ENCODE measurements at regions of chr10 and their contacts with region 1.

Region 1: DNA sequence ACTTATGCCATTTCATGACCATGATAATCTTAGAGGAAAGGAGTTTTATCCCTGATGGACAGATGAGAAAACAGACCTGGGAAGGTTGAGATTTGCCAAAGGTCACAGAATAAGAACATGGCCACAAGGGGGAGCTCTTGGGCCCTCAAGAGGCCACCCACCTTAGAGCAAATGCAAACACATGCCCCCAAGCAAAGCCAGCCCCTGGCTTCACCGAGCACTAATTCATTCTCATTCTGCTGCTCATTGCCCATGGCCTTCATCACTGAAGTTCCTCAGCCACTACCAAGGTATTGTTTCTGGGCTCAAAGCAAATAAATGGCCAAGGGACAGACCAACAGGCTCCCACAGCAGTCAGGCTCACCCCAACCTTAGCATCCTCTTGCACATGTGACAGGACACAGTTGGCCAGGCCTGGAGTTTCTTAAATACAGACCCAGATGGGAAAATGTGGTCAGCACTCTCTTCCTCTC is 44.2 kb downstream of the PDLIM1 start:
- DNase-seq: peak; percentile 59
- ATAC-seq: peak; percentile 86
- H3K4me3 Mint-ChIP-seq: no peak overlapping the region
- H3K27ac Mint-ChIP-seq: peak overlapping the region; percentile 61
- H3K4me1 Mint-ChIP-seq: peaks cover 25% of the 10 kb centered on the region
- H3K27me3 Mint-ChIP-seq: no peaks in the 10 kb centered on the region
- CTCF ChIP-seq: peak; percentile 26

Region 2: DNA sequence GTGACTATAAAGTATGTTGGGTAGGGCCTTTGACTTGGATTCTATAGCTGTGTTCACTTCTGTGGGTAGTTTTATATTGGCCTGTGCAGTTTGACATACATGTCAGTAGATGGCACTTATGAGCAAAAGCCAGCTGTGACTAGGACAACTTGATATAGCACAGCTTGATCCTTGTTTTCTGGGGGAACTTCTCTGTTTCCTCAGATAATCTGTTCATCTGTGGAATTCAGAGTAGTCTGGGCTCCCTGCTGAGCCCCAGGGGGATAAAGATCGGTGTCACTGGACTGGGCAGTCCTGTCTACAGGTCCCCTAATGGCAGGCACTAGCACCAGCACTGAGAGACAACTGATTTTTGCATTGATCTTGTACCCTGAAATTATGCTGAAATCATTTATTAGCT is 282.7 kb before region 1 on chr10:
- CTCF ChIA-PET with region 1: no interaction called
- POLR2A ChIA-PET with region 1: no interaction called
- intact Hi-C with region 1: loop called (anchors 2 kb)
- DNase-seq: no peak
- ATAC-seq: no peak
- H3K4me3 Mint-ChIP-seq: no peak overlapping the region
- H3K27ac Mint-ChIP-seq: no peak overlapping the region
- H3K4me1 Mint-ChIP-seq: no peaks in the 10 kb centered on the region
- H3K27me3 Mint-ChIP-seq: peaks cover 1% of the 10 kb centered on the region
- CTCF ChIP-seq: no peak

Region 3: DNA sequence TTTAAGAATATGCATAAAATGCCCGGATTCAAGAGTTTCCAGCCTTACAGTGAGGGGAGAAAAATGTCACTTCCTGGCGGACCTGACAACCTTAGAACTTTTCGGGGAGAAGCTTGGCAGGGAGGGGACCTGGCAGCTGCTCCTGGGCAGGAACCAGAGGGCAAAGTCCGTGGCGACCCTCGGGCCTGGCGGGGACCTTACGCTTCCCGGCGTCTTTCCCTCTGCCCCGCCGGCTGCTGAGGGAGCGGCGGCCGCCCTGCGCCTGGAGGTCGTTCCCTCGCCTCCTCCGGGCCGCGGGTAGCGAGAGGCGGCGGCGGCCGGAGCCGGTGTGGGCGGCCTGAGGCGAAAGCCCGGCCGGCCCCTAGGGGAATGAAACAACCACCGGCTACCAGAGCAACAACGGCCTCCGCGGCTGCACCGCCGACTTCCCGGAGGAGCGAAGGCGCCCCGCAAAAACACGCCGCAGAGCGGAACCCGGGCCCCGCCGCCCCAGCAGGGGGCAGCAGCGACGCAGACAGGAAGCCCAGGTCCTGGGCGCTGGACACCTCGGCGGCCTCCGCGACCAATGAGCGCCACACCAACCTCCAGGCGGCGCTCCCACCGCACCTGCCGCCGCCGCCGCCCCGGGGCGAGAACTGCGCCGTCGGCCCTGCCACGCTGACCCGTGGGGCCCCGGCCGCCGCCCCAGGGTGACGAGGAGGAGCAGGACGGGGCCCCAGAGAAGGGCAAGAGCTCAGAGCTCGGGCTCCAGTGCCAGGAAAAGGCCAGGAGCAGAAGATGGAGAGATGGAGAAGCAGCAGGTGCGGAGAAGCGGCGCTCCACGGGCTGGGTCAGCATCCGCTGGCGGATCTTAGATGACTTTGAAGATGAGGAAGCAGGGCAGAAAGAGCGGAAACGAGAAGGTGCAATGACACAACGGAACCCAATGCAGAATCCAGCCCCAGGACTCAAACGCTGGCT is 63.1 kb before region 1 on chr10:
- CTCF ChIA-PET with region 1: interaction called, 12 read pairs
- POLR2A ChIA-PET with region 1: no interaction called
- intact Hi-C with region 1: loop called (anchors 1 kb)
- DNase-seq: peak; percentile 87
- ATAC-seq: peak; percentile 96
- H3K4me3 Mint-ChIP-seq: peak overlapping the region; percentile 83
- H3K27ac Mint-ChIP-seq: peak overlapping the region; percentile 84
- H3K4me1 Mint-ChIP-seq: peaks cover 7% of the 10 kb centered on the region
- H3K27me3 Mint-ChIP-seq: no peaks in the 10 kb centered on the region
- CTCF ChIP-seq: peak; percentile 68

Region 4: DNA sequence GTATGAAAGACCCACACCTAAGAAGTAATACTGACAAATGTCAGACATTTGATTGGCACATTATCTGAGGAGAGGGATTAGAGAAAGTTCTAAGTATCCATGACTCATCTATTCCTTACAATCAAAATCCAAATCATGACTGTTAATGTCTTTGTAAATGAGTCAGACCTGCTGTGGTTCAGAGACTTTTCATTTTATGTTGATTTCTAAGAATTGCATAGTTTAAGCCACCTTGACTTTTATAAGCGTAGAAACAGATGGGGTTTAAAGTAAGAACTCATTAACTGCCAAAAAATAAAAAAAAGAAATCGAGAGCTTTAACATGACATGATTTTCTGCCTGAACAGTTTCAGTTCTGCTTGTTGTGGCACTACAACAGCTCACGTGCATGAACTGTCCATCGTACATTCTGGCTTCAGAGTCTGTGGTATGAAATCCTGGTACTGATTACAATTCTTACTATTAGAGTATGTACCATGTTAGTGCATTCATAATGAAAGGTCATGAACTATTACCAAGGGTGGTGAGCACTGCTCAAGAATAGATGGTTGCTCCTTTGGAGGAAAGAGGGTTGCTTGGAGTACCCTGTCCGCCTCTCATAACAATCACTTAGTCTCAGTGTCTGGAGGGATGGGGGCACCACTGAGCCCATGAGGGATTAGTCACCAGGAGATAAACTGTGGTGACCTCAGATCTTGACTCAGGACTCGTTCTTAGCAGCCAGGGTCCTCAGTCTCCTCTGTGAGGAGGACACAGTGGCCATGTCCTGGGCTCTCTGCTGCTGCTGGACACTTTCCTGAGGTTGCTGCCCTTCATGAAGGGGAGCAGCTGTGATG is 10.3 kb before region 1 on chr10:
- CTCF ChIA-PET with region 1: interaction called, 11 read pairs
- POLR2A ChIA-PET with region 1: no interaction called
- intact Hi-C with region 1: no loop called
- DNase-seq: no peak
- ATAC-seq: peak; percentile 81
- H3K4me3 Mint-ChIP-seq: peak overlapping the region; percentile 38
- H3K27ac Mint-ChIP-seq: peak overlapping the region; percentile 81
- H3K4me1 Mint-ChIP-seq: peaks cover 24% of the 10 kb centered on the region
- H3K27me3 Mint-ChIP-seq: no peaks in the 10 kb centered on the region
- CTCF ChIP-seq: no peak

Region 5: GRCh38 chr10:95290461-95291364 is 44.1 kb after region 1 on chr10 and contains the start of gene PDLIM1:
- CTCF ChIA-PET with region 1: interaction called, 18 read pairs
- POLR2A ChIA-PET with region 1: interaction called, 15 read pairs
- intact Hi-C with region 1: loop called (anchors 2 kb)
- DNase-seq: peak; percentile 81
- ATAC-seq: peak; percentile 73
- H3K4me3 Mint-ChIP-seq: peak within 1 kb of the TSS; percentile 90
- H3K27ac Mint-ChIP-seq: peak within 1 kb of the TSS; percentile 95
- H3K4me1 Mint-ChIP-seq: peaks cover 87% of the 10 kb centered on the region
- H3K27me3 Mint-ChIP-seq: no peaks in the 10 kb centered on the region
- CTCF ChIP-seq: no peak
- total RNA-seq, gene PDLIM1: 141 and 149 TPM in 2 replicates

Region 6: DNA sequence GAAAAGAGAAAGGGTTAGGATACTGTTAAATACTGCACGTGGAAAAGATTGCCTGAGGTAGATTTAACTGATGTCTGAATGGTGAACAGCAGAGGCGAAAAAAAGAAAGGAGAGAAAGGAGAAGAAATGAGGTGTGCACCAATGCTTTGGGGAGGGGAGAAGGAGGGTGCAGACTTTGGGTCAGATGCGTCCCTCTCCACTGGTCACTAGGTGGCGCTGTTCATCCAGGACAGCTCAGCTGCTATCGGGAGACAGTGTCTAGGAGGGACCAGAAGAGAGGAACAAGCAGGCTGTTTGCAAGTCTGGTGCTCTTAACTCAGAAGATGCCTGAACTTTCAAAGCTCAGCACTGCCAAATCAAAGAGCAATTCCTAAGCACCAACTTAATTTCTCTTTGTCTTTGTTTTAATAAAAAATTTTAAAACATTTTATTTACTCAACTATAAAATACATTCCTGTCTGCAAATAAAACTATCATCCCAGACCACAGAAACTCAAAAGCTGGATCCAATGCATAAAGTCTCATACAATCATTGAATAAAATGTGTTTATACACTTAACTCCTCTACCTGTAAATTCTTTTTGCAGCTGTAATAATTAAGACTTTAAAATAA is 128.1 kb after region 1 on chr10:
- CTCF ChIA-PET with region 1: interaction called, 13 read pairs
- POLR2A ChIA-PET with region 1: no interaction called
- intact Hi-C with region 1: no loop called
- DNase-seq: no peak
- ATAC-seq: peak; percentile 64
- H3K4me3 Mint-ChIP-seq: no peak overlapping the region
- H3K27ac Mint-ChIP-seq: no peak overlapping the region
- H3K4me1 Mint-ChIP-seq: no peaks in the 10 kb centered on the region
- H3K27me3 Mint-ChIP-seq: peaks cover 38% of the 10 kb centered on the region
- CTCF ChIP-seq: no peak